ENCODE measurements at regions of chr12 and their contacts with region 1.

Region 1: DNA sequence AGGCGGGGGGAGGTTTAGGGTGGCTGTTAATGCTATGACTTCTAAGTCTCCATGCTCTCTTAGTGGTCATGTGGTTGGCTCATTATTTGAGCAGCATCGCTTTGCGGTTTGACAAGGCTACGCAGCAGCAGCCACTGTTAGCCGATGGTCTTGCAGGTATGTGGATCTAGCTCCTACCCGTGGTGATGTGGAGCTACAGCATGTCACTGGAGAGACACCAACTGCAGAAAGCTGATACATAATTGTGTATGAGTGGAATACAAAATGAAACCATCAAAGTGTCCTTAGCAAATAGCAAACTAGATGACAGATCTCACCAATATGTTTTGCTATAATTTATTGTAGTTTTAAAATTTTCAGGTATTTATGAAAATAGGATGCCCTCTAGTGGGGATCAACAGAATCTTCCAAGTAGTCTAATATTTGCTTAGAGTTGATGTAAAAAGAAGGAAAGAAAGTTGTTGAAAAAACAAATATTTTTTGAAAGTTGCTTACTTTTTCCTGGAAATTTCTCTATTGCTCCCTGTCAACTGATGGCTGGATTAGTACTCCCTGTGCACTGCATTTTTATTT is 94.9 kb downstream of the NAV3 start:
- DNase-seq: peak; percentile 45
- ATAC-seq: peak; percentile 100
- H3K4me3 ChIP-seq: no peak overlapping the region
- H3K27ac ChIP-seq: no peak overlapping the region
- H3K4me1 ChIP-seq: no peaks in the 10 kb centered on the region
- H3K27me3 ChIP-seq: no peaks in the 10 kb centered on the region
- CTCF ChIP-seq: peak; percentile 85 to 98 (median 98)
- EP300 ChIP-seq: no peak
- POLR2A ChIP-seq: no peak
- RAD21 ChIP-seq: peak; percentile 93

Region 2: DNA sequence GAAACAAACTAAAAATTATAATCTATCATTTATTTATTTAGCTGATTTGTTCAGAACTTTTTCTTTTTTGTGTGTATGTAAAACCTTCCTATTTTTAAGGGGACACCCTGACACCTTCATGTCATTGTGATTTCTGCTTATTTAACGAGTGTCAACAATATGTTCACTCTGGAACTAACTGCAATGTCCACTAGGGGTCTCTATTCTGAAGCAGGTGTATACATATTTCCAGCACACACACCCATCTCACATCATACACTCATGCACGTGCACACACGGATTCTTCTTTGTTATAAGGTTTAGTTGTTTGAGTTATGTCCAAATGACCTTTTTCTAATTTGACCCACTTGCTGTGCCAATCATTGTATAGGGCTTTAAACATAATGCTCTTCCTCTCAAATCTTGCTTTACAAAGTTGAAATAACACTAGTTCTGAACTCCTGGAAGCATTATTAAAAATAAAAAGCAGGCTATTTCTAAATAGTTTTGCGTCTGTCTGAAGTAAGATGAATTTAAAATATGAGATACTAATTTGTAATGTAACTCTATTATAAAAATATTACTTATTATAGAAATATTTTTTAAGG is 875.8 kb before region 1 on chr12:
- CTCF ChIA-PET with region 1: no interaction called
- POLR2A ChIA-PET with region 1: no interaction called
- RAD21 ChIA-PET with region 1: no interaction called
- SMC1A ChIA-PET with region 1: no interaction called
- in situ Hi-C with region 1: no loop called
- intact Hi-C with region 1: loop called (anchors 10 kb)
- DNase-seq: peak; percentile 44
- ATAC-seq: peak; percentile 99
- H3K4me3 ChIP-seq: no peak overlapping the region
- H3K27ac ChIP-seq: no peak overlapping the region
- H3K4me1 ChIP-seq: no peaks in the 10 kb centered on the region
- H3K27me3 ChIP-seq: no peaks in the 10 kb centered on the region
- CTCF ChIP-seq: peak; percentile 71 to 86 (median 74)
- EP300 ChIP-seq: no peak
- POLR2A ChIP-seq: no peak
- RAD21 ChIP-seq: peak; percentile 86

Region 3: DNA sequence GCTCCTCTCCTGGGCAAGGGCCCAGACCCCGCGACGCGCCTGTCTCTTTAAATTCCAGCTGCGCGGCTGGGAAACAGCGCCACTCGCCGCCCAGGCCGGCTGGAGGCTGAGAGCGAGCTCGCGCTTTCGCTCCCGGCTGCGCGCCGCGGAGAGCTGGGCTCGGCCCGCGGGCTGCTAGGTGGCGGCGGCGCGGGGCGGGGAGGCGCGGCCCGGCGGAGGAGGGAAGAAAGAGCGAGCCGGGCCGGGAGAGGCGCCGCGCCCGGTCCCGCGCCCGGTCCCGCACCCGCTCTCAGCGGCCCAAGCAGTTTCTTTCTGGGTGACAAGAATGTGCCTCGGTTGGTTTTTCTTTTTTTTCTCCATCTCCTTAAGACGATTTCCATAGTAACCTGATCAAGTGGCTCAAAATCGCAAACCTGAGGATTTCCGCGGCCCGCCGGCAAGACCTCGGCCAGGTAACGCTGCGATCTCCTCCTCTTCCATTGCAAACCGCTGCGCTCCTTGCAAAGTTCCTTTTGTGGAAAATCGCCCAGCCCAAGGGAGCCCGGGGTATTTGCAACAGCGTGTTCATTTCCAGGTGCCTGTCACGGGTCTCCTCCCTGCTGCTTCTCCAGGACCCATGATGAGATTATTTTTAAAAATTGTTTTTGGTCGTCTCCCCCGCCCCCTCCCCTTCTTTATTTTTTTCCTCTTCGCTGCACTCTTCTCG is 600.7 kb before region 1 on chr12:
- CTCF ChIA-PET with region 1: no interaction called
- POLR2A ChIA-PET with region 1: no interaction called
- RAD21 ChIA-PET with region 1: no interaction called
- SMC1A ChIA-PET with region 1: no interaction called
- in situ Hi-C with region 1: no loop called
- intact Hi-C with region 1: no loop called
- DNase-seq: no peak
- ATAC-seq: peak; percentile 96
- H3K4me3 ChIP-seq: peak overlapping the region; percentile 53
- H3K27ac ChIP-seq: no peak overlapping the region
- H3K4me1 ChIP-seq: no peaks in the 10 kb centered on the region; the same call in none of the 2 replicates
- H3K27me3 ChIP-seq: peaks cover 0 to 6% of the 10 kb centered on the region in 2 experiments; a peak in 1 of 4 replicates
- CTCF ChIP-seq: peak; percentile 34 to 46 (median 39); a peak in 5 of 6 replicates
- EP300 ChIP-seq: no peak
- POLR2A ChIP-seq: no peak
- RAD21 ChIP-seq: peak; percentile 38; the same call in 1 of the 2 replicates

Region 4: DNA sequence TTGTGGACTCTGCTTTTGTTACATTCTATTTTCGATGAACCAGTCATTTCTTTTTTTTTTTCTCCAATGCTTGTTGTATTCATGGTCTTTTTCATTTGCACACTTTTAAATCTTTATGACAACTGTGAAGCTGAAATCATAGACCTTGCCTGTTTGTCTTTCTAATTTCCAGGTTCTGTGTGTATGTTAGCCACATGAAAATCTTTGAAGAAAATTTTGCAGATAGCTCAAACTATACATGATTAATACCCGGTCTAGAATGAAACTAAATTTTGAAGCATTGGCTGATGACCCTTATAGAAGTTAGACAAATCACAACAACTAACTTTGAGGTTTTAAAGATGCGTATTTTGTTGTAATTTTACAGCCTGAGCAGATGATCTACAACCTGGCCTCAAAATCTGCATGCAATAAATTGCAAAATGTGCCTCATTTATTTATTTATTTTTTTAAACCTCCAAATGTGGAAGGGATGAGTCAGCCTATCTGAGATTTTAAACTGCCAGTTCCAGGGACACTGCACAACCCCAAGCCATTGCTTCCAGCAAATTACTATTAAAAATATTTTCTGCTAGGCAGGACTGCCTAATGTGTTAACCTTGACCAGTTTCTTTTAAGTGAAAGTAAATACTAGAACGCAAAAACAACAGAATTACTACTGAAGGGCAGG is 191.3 kb before region 1 on chr12:
- CTCF ChIA-PET with region 1: interaction called, 22 read pairs
- POLR2A ChIA-PET with region 1: no interaction called
- RAD21 ChIA-PET with region 1: interaction called, 18 read pairs
- SMC1A ChIA-PET with region 1: interaction called, 12 read pairs
- in situ Hi-C with region 1: loop called (anchors 5 kb)
- intact Hi-C with region 1: no loop called
- DNase-seq: no peak
- ATAC-seq: no peak
- H3K4me3 ChIP-seq: no peak overlapping the region
- H3K27ac ChIP-seq: no peak overlapping the region
- H3K4me1 ChIP-seq: no peaks in the 10 kb centered on the region
- H3K27me3 ChIP-seq: no peaks in the 10 kb centered on the region
- CTCF ChIP-seq: no peak
- EP300 ChIP-seq: no peak
- POLR2A ChIP-seq: no peak
- RAD21 ChIP-seq: no peak

Region 5: DNA sequence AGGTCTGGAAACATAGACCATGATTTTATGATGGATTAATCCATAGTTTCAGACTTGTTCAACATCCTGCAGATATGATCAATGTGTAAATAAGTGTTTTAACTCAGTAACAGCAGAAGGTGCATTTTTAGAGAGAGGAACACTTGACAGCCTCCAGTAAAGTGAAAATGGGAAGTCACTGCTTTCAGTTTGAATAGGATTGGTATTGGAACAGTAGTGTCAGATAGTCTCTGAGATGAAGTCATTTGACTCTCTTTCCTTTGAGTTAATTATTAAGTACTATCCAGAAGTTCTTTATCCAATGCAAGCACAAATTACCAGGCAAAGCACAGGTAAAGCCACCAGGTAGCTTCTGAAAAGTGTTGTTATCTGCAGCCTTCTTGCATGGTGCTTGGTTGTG is 109.4 kb before region 1 on chr12:
- CTCF ChIA-PET with region 1: interaction called, 7 read pairs
- POLR2A ChIA-PET with region 1: no interaction called
- RAD21 ChIA-PET with region 1: interaction called, 5 read pairs
- SMC1A ChIA-PET with region 1: no interaction called
- in situ Hi-C with region 1: no loop called
- intact Hi-C with region 1: loop called (anchors 10 kb)
- DNase-seq: peak; percentile 45
- ATAC-seq: peak; percentile 97
- H3K4me3 ChIP-seq: no peak overlapping the region
- H3K27ac ChIP-seq: no peak overlapping the region
- H3K4me1 ChIP-seq: peaks cover 5% of the 10 kb centered on the region; the same call in 1 of the 2 replicates
- H3K27me3 ChIP-seq: no peaks in the 10 kb centered on the region
- CTCF ChIP-seq: no peak
- EP300 ChIP-seq: peak in 1 of 2 experiments; percentile 91; a peak in 2 of 4 replicates
- POLR2A ChIP-seq: no peak
- RAD21 ChIP-seq: no peak

Region 6: GRCh38 chr12:77907936-77908335 is 17.7 kb before region 1 on chr12:
- CTCF ChIA-PET with region 1: interaction called, 40 read pairs
- POLR2A ChIA-PET with region 1: no interaction called
- RAD21 ChIA-PET with region 1: interaction called, 6 read pairs
- SMC1A ChIA-PET with region 1: interaction called, 5 read pairs
- in situ Hi-C with region 1: no loop called
- intact Hi-C with region 1: no loop called
- DNase-seq: no peak
- ATAC-seq: no peak
- H3K4me3 ChIP-seq: no peak overlapping the region
- H3K27ac ChIP-seq: no peak overlapping the region
- H3K4me1 ChIP-seq: no peaks in the 10 kb centered on the region
- H3K27me3 ChIP-seq: no peaks in the 10 kb centered on the region
- CTCF ChIP-seq: no peak
- EP300 ChIP-seq: no peak
- POLR2A ChIP-seq: no peak
- RAD21 ChIP-seq: no peak

Region 7: GRCh38 chr12:77980782-77981181 is 55.2 kb after region 1 on chr12:
- CTCF ChIA-PET with region 1: no interaction called
- POLR2A ChIA-PET with region 1: no interaction called
- RAD21 ChIA-PET with region 1: no interaction called
- SMC1A ChIA-PET with region 1: no interaction called
- in situ Hi-C with region 1: no loop called
- intact Hi-C with region 1: no loop called
- DNase-seq: no peak
- ATAC-seq: no peak
- H3K4me3 ChIP-seq: no peak overlapping the region
- H3K27ac ChIP-seq: no peak overlapping the region
- H3K4me1 ChIP-seq: no peaks in the 10 kb centered on the region
- H3K27me3 ChIP-seq: no peaks in the 10 kb centered on the region
- CTCF ChIP-seq: no peak
- EP300 ChIP-seq: no peak
- POLR2A ChIP-seq: no peak
- RAD21 ChIP-seq: no peak